Activated CD4-positive, alpha-beta memory T cell treated with anti-CD3 and anti-CD28 coated beads, Interleukin-2, amount 10 ng/mL, durations not matched to agents 7 days and 5 days (primary cell): ENCODE measurements at regions of chr19 and their contacts with region 1.

Region 1: DNA sequence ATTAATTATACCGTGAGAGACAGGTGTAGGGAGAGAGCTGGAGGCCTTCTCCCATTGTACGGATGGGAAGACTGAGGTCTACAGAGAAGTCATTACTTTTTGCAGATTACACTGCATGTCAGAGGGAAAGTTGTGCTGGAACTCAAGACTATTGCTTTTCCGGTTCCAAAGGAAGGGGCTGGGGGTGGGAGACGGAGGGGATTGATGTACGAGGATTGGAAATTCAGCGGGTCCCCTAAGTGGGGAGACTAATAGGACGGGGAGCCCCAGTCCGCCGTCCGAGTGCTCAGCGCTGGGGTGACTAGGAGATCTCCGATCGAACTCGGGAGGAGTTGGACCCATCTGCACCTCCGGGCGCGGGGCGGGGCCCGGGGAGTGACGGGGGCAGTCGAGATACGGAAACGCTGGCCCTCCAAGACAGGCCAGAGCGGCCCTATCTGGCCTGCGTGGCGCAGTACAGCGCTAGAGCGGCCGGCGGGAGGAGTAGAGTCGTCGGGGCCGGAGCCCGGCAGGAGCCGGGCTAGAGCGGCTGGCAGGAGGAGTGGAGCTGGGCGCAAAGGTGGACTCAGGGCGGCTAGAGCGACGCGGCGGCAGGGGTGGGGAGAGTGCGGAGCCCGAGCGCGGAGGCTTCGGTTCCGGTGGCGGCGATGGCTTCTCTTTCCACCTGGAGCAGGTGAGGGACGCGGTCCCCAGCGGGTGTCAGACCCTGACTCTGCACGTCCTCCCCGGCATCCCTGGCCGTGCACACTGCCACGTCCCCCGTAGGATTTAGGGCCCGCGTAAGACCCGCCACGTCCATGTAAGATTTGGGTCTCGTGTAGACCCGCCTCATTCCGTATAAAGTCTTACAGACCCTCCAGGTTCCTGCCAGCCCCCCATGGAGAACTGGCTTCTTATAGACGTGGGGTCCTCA is 1.1 kb downstream of the ARHGEF1 start:
- DNase-seq: peak; percentile 94
- H3K4me3 Mint-ChIP-seq: peak overlapping the region; percentile 85
- H3K27ac Mint-ChIP-seq: peak overlapping the region; percentile 93
- H3K4me1 Mint-ChIP-seq: peaks cover 55% of the 10 kb centered on the region
- H3K27me3 Mint-ChIP-seq: no peaks in the 10 kb centered on the region

Region 2: DNA sequence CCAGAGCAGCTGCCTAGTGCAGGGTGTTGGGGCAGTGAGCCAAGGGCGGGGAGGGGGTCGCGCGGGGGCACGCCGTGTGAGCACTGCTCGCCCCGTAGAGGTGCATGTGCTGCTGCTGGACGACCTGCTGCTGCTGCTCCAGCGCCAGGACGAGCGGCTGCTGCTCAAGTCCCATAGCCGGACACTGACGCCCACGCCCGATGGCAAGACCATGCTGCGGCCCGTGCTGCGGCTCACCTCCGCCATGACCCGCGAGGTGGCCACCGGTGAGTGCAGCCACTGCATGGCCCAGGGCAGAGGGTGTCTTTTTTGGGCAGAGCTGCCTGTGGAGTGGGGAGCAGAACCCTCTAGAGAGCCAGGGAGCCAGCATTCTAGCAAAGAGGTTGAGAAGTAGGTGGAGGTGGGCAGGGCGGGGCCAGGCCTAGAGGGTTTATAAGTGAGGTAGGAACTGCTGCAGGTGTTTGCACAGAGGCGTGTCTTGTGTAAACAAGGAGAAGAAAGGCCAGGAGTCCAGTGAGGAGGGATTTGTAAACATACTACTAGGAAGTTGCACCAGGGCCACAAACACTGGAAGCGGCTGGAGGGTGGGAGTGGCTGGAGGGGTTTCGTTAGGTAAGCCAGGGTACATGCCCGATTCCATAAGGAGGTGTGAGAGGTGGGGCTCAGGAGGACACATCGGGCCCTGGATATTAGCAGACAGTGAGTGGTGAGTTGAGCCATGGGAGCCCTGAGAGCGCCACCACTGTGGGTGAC is 20.2 kb after region 1 on chr19:
- CTCF ChIA-PET with region 1: interaction called, 3 read pairs
- POLR2A ChIA-PET with region 1: interaction called, 166 read pairs
- DNase-seq: no peak
- H3K4me3 Mint-ChIP-seq: no peak overlapping the region
- H3K27ac Mint-ChIP-seq: no peak overlapping the region
- H3K4me1 Mint-ChIP-seq: peaks cover 17% of the 10 kb centered on the region
- H3K27me3 Mint-ChIP-seq: no peaks in the 10 kb centered on the region

Region 3: DNA sequence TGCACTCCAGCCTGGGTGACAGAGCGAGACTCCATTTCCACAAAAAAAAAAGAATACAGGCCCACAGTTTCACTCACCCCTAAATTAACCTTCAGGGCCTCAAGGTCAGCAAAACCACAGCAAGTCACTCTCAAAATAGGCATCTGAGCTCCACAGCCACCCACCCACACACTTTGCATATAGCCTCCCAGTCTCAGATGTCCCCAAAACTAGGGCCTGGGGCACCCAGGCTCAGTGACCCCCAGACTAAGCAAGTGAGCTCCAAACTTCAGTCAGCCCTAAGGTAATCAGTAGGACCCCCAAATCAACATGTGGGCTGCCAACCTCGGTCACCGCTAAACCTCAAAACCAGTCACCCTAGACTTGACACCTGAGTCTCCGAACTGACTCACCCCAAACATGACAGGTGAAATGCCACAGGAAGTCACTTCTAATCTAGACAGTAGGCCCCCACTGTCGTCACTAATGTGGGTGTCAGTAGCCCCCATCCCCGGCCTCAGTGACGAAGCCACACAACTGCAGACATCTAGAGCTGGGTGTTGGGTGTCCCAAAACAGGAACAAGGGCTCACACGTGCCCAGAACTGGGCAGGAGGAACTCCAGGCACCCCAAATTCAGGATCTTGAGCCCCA is 61.2 kb after region 1 on chr19:
- CTCF ChIA-PET with region 1: interaction called, 4 read pairs
- POLR2A ChIA-PET with region 1: interaction called, 45 read pairs
- DNase-seq: peak; percentile 87
- H3K4me3 Mint-ChIP-seq: peak overlapping the region; percentile 4
- H3K27ac Mint-ChIP-seq: peak overlapping the region; percentile 79
- H3K4me1 Mint-ChIP-seq: peaks cover 44% of the 10 kb centered on the region
- H3K27me3 Mint-ChIP-seq: peaks cover 18% of the 10 kb centered on the region

Region 4: GRCh38 chr19:41959056-41960053 is 75.3 kb after region 1 on chr19 and contains the start of gene RABAC1:
- CTCF ChIA-PET with region 1: no interaction called
- POLR2A ChIA-PET with region 1: interaction called, 34 read pairs
- DNase-seq: peak; percentile 92
- H3K4me3 Mint-ChIP-seq: peak within 1 kb of the TSS; percentile 92
- H3K27ac Mint-ChIP-seq: peak within 1 kb of the TSS; percentile 79
- H3K4me1 Mint-ChIP-seq: peaks cover 21% of the 10 kb centered on the region
- H3K27me3 Mint-ChIP-seq: no peaks in the 10 kb centered on the region
- total RNA-seq, gene RABAC1: 97.2 to 105 TPM